Left cardiac atrium (tissue), 4 donors: ENCODE measurements at regions of chr1 and their contacts with region 1.

Region 1: DNA sequence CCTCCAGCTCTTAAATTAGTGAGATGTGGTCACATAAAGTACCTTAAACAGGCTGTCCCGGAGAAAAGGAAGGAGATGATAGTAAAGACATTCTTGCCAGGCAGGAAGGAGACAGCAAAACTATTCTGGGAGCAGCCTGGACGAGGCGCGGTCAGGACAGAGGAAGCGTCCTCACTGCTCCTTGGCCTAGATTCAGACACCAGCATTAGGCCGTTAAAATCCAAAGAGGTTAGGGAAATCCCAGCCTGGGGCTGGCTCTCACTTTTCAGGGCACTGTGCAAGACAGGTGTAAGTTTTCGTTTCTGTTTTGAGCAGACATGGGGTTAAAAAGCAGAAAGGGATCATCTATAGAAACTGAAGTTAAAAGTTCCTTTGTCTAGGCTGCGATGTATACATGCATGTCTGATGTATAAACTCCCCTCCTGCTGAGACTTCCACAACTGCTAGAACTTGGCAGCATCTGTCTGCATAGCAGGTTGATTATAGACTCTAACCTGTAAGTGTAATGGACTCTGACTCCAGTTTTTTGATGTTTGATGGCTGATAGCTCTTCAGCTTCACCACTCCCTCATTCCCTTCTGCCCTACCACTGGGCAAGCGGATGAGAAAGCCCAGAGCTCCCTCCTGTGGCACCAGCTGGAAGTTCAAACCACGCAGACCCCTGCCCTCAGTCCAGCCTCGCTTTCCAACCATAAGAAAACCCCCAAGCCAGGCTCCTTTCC is 21.5 kb downstream of the STPG1 start:
- DNase-seq: peak; percentile 72
- ATAC-seq: peak; percentile 84 to 88

Region 2: GRCh38 chr1:24201941-24202440 is 190.1 kb before region 1 on chr1:
- intact Hi-C with region 1: loop called (anchors 1 to 2 kb)
- DNase-seq: peak; percentile 83
- ATAC-seq: peak; percentile 82 to 91